Sigmoid colon (tissue), 7 donors: ENCODE measurements at regions of chr11 and their contacts with region 1.

Region 1: GRCh38 chr11:82718307-82718706 is 15.4 kb downstream of the FAM181B start:
- DNase-seq: no peak
- H3K4me3 ChIP-seq: no peak overlapping the region
- H3K27ac ChIP-seq: no peak overlapping the region
- H3K4me1 ChIP-seq: no peaks in the 10 kb centered on the region
- H3K27me3 ChIP-seq: no peaks in the 10 kb centered on the region
- CTCF ChIP-seq: peak; percentile 53 to 66 (median 54)
- EP300 ChIP-seq: no peak
- POLR2A ChIP-seq: no peak

Region 2: DNA sequence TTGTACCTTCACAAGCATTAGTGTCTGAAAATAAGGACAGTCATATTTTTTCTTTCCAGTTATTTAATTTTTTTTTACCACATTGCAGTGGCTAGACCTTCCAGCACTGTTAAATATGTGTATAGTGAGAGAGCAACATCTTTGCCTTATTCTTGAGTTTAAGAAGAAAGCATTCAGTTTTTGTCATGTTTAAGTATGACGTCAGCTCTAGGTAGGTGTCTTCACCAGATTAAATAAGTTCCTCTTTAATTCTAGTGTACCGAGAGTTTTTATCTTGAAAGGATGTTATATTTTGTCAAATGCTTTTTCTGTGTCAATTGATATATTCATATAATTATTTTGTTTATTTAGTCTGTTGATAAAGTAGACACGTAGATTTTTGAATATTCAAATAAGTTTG is 243.4 kb before region 1 on chr11:
- intact Hi-C with region 1: no loop called
- DNase-seq: no peak
- H3K4me3 ChIP-seq: no peak overlapping the region
- H3K27ac ChIP-seq: no peak overlapping the region
- H3K4me1 ChIP-seq: no peaks in the 10 kb centered on the region
- H3K27me3 ChIP-seq: no peaks in the 10 kb centered on the region
- CTCF ChIP-seq: no peak
- EP300 ChIP-seq: no peak
- POLR2A ChIP-seq: no peak

Region 3: DNA sequence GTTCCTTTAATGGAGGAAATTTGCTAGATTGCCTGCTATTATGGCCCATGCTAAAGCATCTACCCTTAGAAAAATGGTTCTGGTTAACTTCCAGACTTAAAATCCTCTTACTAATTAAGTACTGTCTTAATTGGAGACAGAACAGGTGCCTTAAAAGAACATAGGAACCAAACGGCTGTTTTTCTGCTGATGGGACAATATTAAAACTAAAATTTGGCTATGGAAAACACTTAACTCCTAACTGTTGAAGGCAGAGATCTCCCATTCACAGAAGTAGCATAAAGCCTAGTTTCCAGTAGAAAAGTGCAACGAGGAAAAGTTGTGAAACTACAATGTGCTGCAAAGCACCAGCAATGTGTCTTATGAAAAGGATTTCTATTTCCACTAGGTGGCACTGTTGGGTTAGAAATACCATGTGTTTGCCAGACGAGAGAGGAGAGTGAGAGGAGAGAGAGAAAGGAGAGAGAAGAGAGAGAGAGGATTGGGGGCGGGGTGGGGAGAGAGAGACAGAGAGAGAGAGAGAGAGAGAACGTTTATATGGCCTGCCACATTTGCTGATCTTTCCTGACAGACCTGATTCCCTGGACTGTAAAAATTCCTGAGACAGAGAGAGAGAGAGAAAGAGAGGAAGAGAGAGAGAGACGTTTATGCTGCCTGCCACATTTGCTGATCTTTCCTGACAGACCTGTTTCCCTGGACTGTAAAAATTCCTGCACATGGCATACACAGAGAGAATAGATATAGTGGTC is 36.1 kb before region 1 on chr11:
- intact Hi-C with region 1: no loop called
- DNase-seq: no peak
- H3K4me3 ChIP-seq: no peak overlapping the region
- H3K27ac ChIP-seq: no peak overlapping the region
- H3K4me1 ChIP-seq: no peaks in the 10 kb centered on the region
- H3K27me3 ChIP-seq: no peaks in the 10 kb centered on the region
- CTCF ChIP-seq: peak in 3 of 4 experiments; percentile 53 to 58 (median 56)
- EP300 ChIP-seq: no peak
- POLR2A ChIP-seq: no peak

Region 4: DNA sequence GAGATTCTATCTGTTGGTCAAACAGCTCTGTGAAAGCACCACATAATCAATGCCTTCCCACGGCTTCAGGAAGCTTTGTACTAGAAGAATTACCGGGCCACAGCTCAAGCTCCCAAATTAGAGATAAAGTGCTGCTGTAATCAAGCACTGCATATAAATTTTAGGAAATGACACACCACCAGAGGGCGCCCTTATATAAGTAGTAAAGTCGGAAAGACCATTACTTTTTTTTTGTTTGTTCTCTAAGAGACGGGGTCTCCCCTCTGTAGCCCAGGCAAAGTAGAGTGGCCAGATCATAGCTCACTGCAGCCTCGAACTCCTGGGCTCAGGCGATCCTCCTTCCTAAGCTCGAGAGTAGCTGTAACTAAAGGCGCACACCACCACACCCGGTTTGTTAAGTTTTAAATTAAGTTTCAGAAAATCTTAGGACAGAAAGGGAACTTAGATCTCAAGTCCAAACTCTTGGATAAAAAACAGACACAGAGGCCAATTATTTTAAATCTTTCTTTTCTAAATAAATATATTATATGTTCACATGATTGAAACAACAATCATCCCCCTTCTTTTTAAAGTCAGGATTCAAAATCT is 149.3 kb after region 1 on chr11:
- intact Hi-C with region 1: loop called (anchors 5 kb)
- DNase-seq: peak; percentile 83
- H3K4me3 ChIP-seq: peak overlapping the region in 2 of 4 donors; percentile 10 to 21
- H3K27ac ChIP-seq: no peak overlapping the region
- H3K4me1 ChIP-seq: peaks cover 0 to 37% (median 8%) of the 10 kb centered on the region in 4 donors
- H3K27me3 ChIP-seq: no peaks in the 10 kb centered on the region
- CTCF ChIP-seq: peak in 3 of 4 experiments; percentile 50 to 78 (median 51)
- EP300 ChIP-seq: no peak
- POLR2A ChIP-seq: no peak

Region 5: DNA sequence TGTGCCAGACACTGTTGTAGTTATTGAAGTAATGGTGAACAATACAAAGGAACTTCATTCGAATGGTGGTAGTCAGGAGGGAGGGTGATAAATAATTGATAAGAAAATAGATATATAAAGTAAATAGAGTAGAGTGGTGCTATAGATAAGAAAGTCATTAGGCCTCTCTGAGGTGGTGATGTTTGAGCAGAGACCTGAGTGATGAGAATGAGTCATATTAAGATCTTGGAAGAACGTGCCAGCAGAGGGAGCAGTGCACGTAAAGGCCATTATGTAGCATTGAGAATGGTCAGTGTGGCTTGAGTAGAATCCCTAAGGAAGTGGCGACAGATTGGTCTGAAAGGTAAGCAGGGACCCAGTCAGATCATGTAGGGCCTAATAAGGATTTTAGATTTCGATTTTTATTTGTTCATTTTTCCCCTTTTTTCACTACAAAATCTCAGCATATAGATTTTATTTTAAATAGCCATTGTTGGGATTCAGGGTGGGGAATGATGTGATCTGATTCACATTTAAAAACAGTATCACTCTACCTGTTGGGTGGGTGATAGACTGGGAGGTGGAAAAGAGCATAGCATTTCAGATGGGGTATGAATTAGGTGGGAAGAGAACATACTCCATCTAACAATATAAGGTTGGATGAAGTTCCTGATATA is 523.1 kb after region 1 on chr11:
- intact Hi-C with region 1: loop called (anchors 10 kb)
- DNase-seq: no peak
- H3K4me3 ChIP-seq: no peak overlapping the region
- H3K27ac ChIP-seq: no peak overlapping the region
- H3K4me1 ChIP-seq: no peaks in the 10 kb centered on the region
- H3K27me3 ChIP-seq: no peaks in the 10 kb centered on the region
- CTCF ChIP-seq: peak; percentile 24 to 52 (median 30)
- EP300 ChIP-seq: no peak
- POLR2A ChIP-seq: no peak

Region 6: GRCh38 chr11:83819933-83820549 is 1101.7 kb after region 1 on chr11:
- intact Hi-C with region 1: loop called (anchors 5 kb)
- DNase-seq: no peak
- H3K4me3 ChIP-seq: no peak overlapping the region
- H3K27ac ChIP-seq: no peak overlapping the region
- H3K4me1 ChIP-seq: no peaks in the 10 kb centered on the region
- H3K27me3 ChIP-seq: no peaks in the 10 kb centered on the region
- CTCF ChIP-seq: peak in 3 of 4 experiments; percentile 44 to 56 (median 50)
- EP300 ChIP-seq: no peak
- POLR2A ChIP-seq: no peak